ENCODE measurements at regions of chr12 and their contacts with region 1.

Region 1: GRCh38 chr12:41242603-41243002 is 54.5 kb downstream of the PDZRN4 start:
- DNase-seq: no peak
- H3K4me3 ChIP-seq: no peak overlapping the region
- H3K27ac ChIP-seq: no peak overlapping the region
- H3K4me1 ChIP-seq: no peaks in the 10 kb centered on the region
- H3K27me3 ChIP-seq: no peaks in the 10 kb centered on the region
- CTCF ChIP-seq: no peak
- EP300 ChIP-seq: no peak
- POLR2A ChIP-seq: no peak
- RAD21 ChIP-seq: no peak

Region 2: GRCh38 chr12:41223600-41223999 is 19.0 kb before region 1 on chr12:
- CTCF ChIA-PET with region 1: interaction called, 14 read pairs
- POLR2A ChIA-PET with region 1: no interaction called
- DNase-seq: peak in 1 of 2 experiments; percentile 48
- H3K4me3 ChIP-seq: no peak overlapping the region
- H3K27ac ChIP-seq: no peak overlapping the region
- H3K4me1 ChIP-seq: peaks cover 0 to 2% (median 0%) of the 10 kb centered on the region in 4 experiments; a peak in 4 of 7 replicates
- H3K27me3 ChIP-seq: no peaks in the 10 kb centered on the region
- CTCF ChIP-seq: peak in 1 of 3 experiments; percentile 14; a peak in 1 of 4 replicates
- EP300 ChIP-seq: no peak
- POLR2A ChIP-seq: no peak
- RAD21 ChIP-seq: 0 out of 4 replicates have a peak, but pooled peaks have one; percentile 3 to 21